ENCODE measurements at regions of chr2 and their contacts with region 1.

Region 1: GRCh38 chr2:113138428-113139322 is 11.3 kb downstream of the IL1RN start:
- DNase-seq: peak; percentile 74
- CTCF ChIP-seq: peak; percentile 64

Region 2: DNA sequence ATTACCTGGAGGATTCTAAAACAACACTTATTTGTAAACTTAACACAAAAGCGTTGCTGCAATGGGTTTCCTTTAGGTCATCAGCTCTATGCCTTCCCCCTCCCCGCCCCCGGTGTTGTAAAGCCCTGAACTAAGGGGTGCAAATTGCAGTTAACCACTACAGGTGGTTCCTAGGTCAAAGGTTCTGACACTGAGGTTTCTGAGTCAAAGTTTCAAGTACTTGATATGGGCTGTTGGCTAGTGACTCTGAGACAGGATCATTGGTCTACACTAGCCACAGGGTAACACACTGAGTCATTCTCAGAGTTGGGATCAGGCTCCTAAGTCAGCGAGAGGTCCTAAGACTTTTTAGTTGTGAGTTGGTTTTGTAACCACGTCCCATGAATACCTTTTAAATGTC is 317.5 kb before region 1 on chr2:
- CTCF ChIA-PET with region 1: no interaction called
- POLR2A ChIA-PET with region 1: no interaction called
- DNase-seq: peak; percentile 73
- CTCF ChIP-seq: no peak

Region 3: GRCh38 chr2:112972423-112973086 is 166.1 kb before region 1 on chr2:
- CTCF ChIA-PET with region 1: no interaction called
- POLR2A ChIA-PET with region 1: no interaction called
- DNase-seq: no peak
- CTCF ChIP-seq: no peak

Region 4: GRCh38 chr2:113116100-113116958 is 22.3 kb before region 1 on chr2:
- CTCF ChIA-PET with region 1: interaction called, 112 read pairs
- POLR2A ChIA-PET with region 1: no interaction called
- DNase-seq: peak; percentile 21
- CTCF ChIP-seq: no peak

Region 5: GRCh38 chr2:113157118-113157896 is 18.6 kb after region 1 on chr2:
- CTCF ChIA-PET with region 1: interaction called, 77 read pairs
- POLR2A ChIA-PET with region 1: no interaction called
- DNase-seq: peak; percentile 67
- CTCF ChIP-seq: no peak

Region 6: GRCh38 chr2:113181258-113182051 is 42.8 kb after region 1 on chr2:
- CTCF ChIA-PET with region 1: interaction called, 133 read pairs
- POLR2A ChIA-PET with region 1: no interaction called
- DNase-seq: no peak
- CTCF ChIP-seq: no peak

Region 7: DNA sequence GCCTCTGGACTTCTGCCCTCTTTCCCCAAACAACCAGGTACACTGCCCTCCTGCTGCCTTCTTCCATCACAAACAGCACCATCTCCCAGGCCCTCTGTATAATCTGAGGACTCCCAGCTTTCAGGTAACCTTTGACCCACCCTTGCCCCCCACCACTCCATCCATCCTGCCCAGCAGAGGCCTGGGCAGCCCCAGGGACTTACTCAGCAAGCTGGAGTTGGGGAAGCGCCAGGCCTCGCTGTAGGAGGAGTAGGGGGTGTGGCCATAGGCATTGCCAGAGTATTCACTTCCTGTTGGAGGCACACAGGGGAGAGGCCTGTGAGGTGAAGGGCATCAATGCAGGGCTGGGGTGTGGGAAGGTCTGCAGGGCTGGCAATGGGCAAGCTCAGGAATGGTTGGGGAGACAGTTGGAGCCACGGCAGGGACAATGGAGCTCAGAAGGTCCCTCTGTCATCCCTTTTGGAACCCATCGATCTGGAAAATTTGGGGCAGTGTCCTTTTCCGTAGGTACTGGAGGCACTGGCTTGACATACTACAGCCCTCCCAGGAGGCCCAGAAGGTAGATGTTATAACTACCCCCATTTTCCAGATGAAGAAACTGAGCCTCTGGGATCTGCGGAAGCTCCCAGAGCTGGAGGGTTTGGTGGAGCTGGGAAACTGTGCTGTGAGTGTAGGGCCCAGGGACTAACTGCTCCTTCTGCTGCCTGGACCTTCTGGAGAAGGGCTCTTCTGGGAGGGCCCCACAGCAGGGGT is 81.4 kb after region 1 on chr2:
- CTCF ChIA-PET with region 1: interaction called, 13 read pairs
- POLR2A ChIA-PET with region 1: no interaction called
- DNase-seq: no peak
- CTCF ChIP-seq: no peak

Region 8: DNA sequence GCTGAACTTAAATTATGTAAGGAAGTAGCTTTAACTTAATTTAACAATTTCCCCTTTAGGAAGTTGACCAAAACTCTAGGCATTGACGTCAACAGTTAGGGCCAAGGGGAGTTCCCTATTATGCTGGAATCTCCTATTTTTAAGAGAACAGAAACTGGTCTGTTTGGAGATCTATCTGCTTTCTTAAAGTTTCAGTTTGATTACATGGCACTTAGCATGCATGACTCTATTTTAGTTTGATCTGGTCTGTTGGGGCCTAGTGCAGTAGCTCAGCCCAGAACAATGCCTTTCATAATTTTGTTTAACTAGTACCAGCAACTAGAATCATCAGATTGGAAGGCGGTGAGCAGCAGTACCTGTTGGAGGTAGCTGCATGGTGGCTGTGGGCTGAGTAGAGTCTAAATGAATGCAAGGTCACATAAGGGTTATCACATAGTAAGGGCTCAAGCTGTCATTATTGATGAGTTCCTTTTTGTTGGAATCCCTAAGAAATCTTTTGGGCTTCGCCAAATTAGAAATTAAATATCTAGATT is 238.3 kb after region 1 on chr2:
- CTCF ChIA-PET with region 1: interaction called, 28 read pairs
- POLR2A ChIA-PET with region 1: no interaction called
- DNase-seq: peak; percentile 22
- CTCF ChIP-seq: no peak

Measured in GM10248 (cell line).